HepG2 (cell line): ENCODE measurements at regions of chr19 and their contacts with region 1.

Region 1: GRCh38 chr19:7903244-7904073 is at the start of gene MAP2K7:
- DNase-seq: peak; percentile 97
- ATAC-seq: peak; percentile 66
- H3K4me3 ChIP-seq: peak within 1 kb of the TSS; percentile 90 to 100 (median 95)
- H3K27ac ChIP-seq: peak within 1 kb of the TSS; percentile 91
- H3K4me1 ChIP-seq: peaks cover 43% of the 10 kb centered on the region
- H3K27me3 ChIP-seq: no peaks in the 10 kb centered on the region; a peak in 1 of 5 replicates
- CTCF ChIP-seq: peak; percentile 99
- EP300 ChIP-seq: no peak
- POLR2A ChIP-seq: peak; percentile 88 to 99
- RAD21 ChIP-seq: peak; percentile 72; the same call in 1 of the 2 replicates
- total RNA-seq, gene MAP2K7: 8.7 and 10.8 TPM in 2 replicates

Region 2: DNA sequence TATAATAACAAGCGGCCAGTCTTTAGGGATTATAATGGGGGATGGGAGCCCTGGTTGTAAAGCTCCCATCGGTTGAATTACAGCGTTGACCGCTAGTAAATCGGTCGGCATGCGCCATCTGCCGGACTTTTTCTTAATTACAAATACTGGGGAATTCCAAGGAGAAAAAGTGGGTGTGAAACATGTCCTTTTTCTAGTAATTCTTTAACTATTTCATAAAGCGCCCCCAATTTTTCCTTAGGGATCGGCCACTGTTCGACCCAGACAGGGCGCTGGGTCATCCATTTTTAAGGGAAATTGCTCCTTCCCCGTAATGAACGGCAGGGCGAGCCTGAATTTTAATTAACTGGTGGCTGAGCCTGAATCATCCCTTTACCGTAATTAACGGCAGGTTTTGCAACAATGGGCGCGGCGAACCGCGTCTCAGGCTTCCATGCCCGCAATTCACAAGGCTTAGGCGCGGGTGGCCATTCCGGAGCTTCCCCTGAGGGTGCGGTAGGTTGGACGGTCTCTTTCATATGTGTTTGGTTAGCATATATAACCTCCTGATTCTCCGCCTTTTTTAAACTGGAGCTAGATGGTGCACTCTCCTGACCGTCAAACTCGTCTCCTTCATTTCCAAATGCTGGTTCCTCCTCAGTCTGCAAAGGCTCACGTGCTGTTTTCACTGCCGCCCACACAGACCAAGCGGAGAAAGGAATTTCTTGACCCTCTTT is 103.7 kb before region 1 on chr19:
- CTCF ChIA-PET with region 1: no interaction called
- POLR2A ChIA-PET with region 1: no interaction called
- in situ Hi-C with region 1: no loop called
- intact Hi-C with region 1: no loop called
- DNase-seq: peak; percentile 60
- ATAC-seq: peak; percentile 45; the same call in 2 of the 3 replicates
- H3K4me3 ChIP-seq: no peak overlapping the region
- H3K27ac ChIP-seq: no peak overlapping the region
- H3K4me1 ChIP-seq: 0 out of 2 replicates have a peak, but pooled peaks cover 4% of the 10 kb centered on the region
- H3K27me3 ChIP-seq: peaks cover 0 to 36% of the 10 kb centered on the region in 2 experiments
- CTCF ChIP-seq: peak; percentile 69
- EP300 ChIP-seq: no peak
- POLR2A ChIP-seq: no peak
- RAD21 ChIP-seq: peak; percentile 65; the same call in 1 of the 2 replicates

Region 3: GRCh38 chr19:7815325-7815724 is 88.1 kb before region 1 on chr19:
- CTCF ChIA-PET with region 1: no interaction called
- POLR2A ChIA-PET with region 1: no interaction called
- in situ Hi-C with region 1: no loop called
- intact Hi-C with region 1: no loop called
- DNase-seq: no peak
- ATAC-seq: no peak
- H3K4me3 ChIP-seq: no peak overlapping the region
- H3K27ac ChIP-seq: no peak overlapping the region
- H3K4me1 ChIP-seq: no peaks in the 10 kb centered on the region
- H3K27me3 ChIP-seq: peaks cover 0 to 3% of the 10 kb centered on the region in 2 experiments; a peak in 2 of 5 replicates
- CTCF ChIP-seq: no peak
- EP300 ChIP-seq: no peak
- POLR2A ChIP-seq: no peak
- RAD21 ChIP-seq: no peak

Region 4: GRCh38 chr19:7852851-7853769 is 50.3 kb before region 1 on chr19:
- CTCF ChIA-PET with region 1: interaction called, 8 read pairs
- POLR2A ChIA-PET with region 1: interaction called, 4 read pairs
- in situ Hi-C with region 1: no loop called
- intact Hi-C with region 1: loop called (anchors 2 kb)
- DNase-seq: peak; percentile 90
- ATAC-seq: peak; percentile 93
- H3K4me3 ChIP-seq: peak overlapping the region in 1 of 3 experiments; percentile 60; a peak in 3 of 6 replicates
- H3K27ac ChIP-seq: peak overlapping the region; percentile 58
- H3K4me1 ChIP-seq: peaks cover 24% of the 10 kb centered on the region
- H3K27me3 ChIP-seq: peaks cover 0 to 5% of the 10 kb centered on the region in 2 experiments; a peak in 2 of 5 replicates
- CTCF ChIP-seq: peak; percentile 93
- EP300 ChIP-seq: no peak; a peak in 1 of 4 replicates
- POLR2A ChIP-seq: no peak
- RAD21 ChIP-seq: peak; percentile 98

Region 5: GRCh38 chr19:7888145-7888825 is 15.2 kb before region 1 on chr19 and contains the start of gene LRRC8E:
- CTCF ChIA-PET with region 1: no interaction called
- POLR2A ChIA-PET with region 1: interaction called, 75 read pairs
- in situ Hi-C with region 1: no loop called
- intact Hi-C with region 1: no loop called
- DNase-seq: peak; percentile 59
- ATAC-seq: peak; percentile 94
- H3K4me3 ChIP-seq: peak within 1 kb of the TSS; percentile 82 to 93 (median 90)
- H3K27ac ChIP-seq: peak within 1 kb of the TSS; percentile 58
- H3K4me1 ChIP-seq: peaks cover 66% of the 10 kb centered on the region
- H3K27me3 ChIP-seq: no peaks in the 10 kb centered on the region
- CTCF ChIP-seq: no peak
- EP300 ChIP-seq: no peak
- POLR2A ChIP-seq: peak; percentile 71 to 85
- RAD21 ChIP-seq: no peak
- total RNA-seq, gene LRRC8E: 4.0 and 8.0 TPM in 2 replicates

Region 6: GRCh38 chr19:7943444-7944176 is 40.2 kb after region 1 on chr19 and contains the start of gene TIMM44:
- CTCF ChIA-PET with region 1: no interaction called
- POLR2A ChIA-PET with region 1: interaction called, 22 read pairs
- in situ Hi-C with region 1: no loop called
- intact Hi-C with region 1: no loop called
- DNase-seq: peak; percentile 99
- ATAC-seq: peak; percentile 98
- H3K4me3 ChIP-seq: peak within 1 kb of the TSS; percentile 65 to 98 (median 91)
- H3K27ac ChIP-seq: peak within 1 kb of the TSS; percentile 90
- H3K4me1 ChIP-seq: peaks cover 38% of the 10 kb centered on the region
- H3K27me3 ChIP-seq: peaks cover 0 to 3% of the 10 kb centered on the region in 2 experiments; a peak in 1 of 5 replicates
- CTCF ChIP-seq: no peak
- EP300 ChIP-seq: no peak
- POLR2A ChIP-seq: peak; percentile 98 to 99
- RAD21 ChIP-seq: peak; percentile 59
- total RNA-seq, gene TIMM44: 71.5 and 72.6 TPM in 2 replicates

Region 7: DNA sequence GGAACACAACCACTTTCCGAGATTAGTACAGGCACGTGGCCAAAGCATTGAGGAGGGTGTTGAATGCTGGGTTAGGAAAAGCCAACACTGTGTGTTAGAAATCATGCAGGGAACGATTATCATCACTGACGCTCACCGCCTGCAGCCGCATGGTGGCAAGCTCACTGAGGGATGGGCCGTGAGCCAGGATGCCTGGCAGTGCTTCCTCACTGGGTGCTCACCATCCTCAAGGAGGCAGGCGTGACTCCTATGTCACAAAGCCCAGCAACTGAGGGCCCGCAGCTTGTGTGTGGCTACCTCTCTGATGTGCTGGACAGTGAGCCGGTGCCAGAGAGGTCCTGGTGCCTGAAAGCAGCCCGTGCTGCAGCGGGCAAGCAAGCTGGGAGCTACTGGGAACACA is 70.4 kb after region 1 on chr19:
- CTCF ChIA-PET with region 1: no interaction called
- POLR2A ChIA-PET with region 1: no interaction called
- in situ Hi-C with region 1: no loop called
- intact Hi-C with region 1: no loop called
- DNase-seq: no peak
- ATAC-seq: no peak
- H3K4me3 ChIP-seq: no peak overlapping the region
- H3K27ac ChIP-seq: no peak overlapping the region
- H3K4me1 ChIP-seq: no peaks in the 10 kb centered on the region
- H3K27me3 ChIP-seq: no peaks in the 10 kb centered on the region
- CTCF ChIP-seq: no peak
- EP300 ChIP-seq: no peak
- POLR2A ChIP-seq: no peak
- RAD21 ChIP-seq: no peak